Spleen (tissue), 13 donors: ENCODE measurements at regions of chr20 and their contacts with region 1.

Region 1: DNA sequence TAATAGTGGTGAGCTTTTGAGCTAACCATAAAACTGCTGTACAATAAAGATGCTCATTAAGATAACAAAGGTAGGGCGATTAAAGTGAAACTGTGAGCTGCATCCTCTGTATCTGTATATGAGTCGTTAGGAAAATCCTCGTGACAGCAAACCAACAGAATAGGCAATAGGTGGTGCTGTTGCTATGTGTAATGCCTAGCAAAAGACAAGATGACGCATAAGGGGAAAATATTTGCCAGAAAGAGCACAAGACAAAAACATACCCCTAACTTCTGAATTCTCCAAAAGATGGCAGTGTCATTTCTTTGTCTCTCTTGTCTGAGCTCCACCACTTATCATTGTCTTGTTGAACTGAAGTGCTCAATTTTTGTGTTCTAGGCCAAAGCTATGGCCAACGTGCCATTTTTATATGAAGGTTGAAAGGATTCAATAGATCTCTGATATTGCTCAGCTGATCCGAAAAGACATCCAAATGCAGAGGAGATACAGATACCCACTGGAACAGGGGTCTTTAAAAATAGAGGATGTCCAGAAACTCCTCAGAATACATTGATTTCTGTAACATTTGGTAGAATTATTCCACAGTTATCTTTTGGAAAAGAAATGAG is 56.3 kb upstream of the ANKEF1 start:
- DNase-seq: no peak
- H3K4me3 ChIP-seq: peak overlapping the region in 1 of 8 donors; percentile 22
- H3K27ac ChIP-seq: no peak overlapping the region
- H3K4me1 ChIP-seq: peaks cover 0 to 6% (median 0%) of the 10 kb centered on the region in 6 donors
- H3K27me3 ChIP-seq: no peaks in the 10 kb centered on the region
- CTCF ChIP-seq: peak; percentile 55 to 79 (median 72)
- POLR2A ChIP-seq: no peak

Region 2: GRCh38 chr20:10090588-10091166 is 112.2 kb after region 1 on chr20:
- intact Hi-C with region 1: loop called (anchors 5 kb)
- DNase-seq: no peak
- H3K4me3 ChIP-seq: no peak overlapping the region
- H3K27ac ChIP-seq: no peak overlapping the region
- H3K4me1 ChIP-seq: no peaks in the 10 kb centered on the region
- H3K27me3 ChIP-seq: no peaks in the 10 kb centered on the region
- CTCF ChIP-seq: peak; percentile 16 to 81 (median 53)
- POLR2A ChIP-seq: no peak

Region 3: DNA sequence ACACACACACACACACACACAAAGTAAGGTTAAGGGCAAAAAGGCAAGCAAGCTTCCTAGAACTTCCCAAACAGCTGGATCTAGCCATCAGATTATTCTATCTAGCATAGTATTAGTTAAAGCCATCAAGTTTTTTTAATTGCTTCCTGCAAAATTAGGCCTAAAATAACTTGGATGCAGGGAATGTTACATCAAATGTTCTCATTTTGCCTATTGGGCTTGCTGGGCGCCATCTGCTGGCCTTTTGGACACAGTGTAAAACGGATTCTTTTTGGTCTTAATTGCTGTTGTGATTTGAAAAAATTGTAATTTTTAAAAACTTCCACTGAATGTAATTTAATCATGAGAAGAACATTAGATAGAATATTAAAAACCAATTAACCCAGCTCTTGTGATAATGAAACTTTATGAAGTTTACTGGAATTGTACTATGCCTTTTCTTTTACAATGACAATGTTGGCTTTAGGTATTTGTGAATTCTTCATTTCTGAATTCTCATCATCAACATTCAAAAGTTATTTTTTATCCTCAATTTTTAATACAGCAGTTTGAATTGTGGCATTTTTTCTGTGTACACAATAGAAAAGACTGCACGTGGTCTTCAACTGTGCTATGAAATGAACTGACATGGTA is 448.7 kb after region 1 on chr20:
- intact Hi-C with region 1: loop called (anchors 5 kb)
- DNase-seq: peak; percentile 78
- H3K4me3 ChIP-seq: no peak overlapping the region
- H3K27ac ChIP-seq: no peak overlapping the region
- H3K4me1 ChIP-seq: peaks cover 0 to 71% (median 22%) of the 10 kb centered on the region in 6 donors
- H3K27me3 ChIP-seq: no peaks in the 10 kb centered on the region
- CTCF ChIP-seq: peak; percentile 15 to 75 (median 65)
- POLR2A ChIP-seq: no peak